Thyroid gland (tissue), 4 donors: ENCODE measurements at regions of chr11 and their contacts with region 1.

Region 1: DNA sequence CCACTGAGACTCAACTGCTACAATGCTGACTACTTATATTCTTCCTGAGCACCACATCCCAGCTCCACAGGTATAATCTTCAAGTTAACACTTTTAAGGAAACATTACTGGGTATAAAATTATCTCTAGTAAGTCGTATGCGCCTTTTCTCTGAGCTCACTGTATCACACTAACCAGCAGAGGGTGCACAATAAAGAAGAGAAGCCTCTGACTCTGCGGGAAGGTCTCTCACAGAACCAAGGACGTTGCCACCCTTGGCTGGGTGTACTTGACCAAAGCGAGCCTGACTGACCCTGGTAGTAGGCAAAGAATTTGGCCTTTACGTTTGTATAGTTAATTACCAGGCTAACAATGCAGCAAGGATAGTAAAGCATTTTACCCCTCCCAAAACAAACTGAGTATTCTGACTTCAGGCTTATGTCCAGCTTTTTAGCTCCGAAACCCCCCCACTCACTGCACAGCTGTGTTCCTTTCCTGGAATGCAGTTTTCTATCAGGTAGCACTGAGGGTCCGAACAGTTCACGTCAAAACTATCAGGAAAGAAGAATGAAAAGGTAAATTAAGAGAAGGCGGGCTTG is at the start of gene BTBD18:
- DNase-seq: peak; percentile 67 to 68
- H3K4me3 ChIP-seq: no peak within 1 kb of the TSS
- H3K27ac ChIP-seq: no peak within 1 kb of the TSS
- H3K4me1 ChIP-seq: peaks cover 0 to 6% of the 10 kb centered on the region in 2 donors
- H3K27me3 ChIP-seq: no peaks in the 10 kb centered on the region
- CTCF ChIP-seq: peak in 5 of 6 experiments; percentile 30 to 70 (median 57)
- POLR2A ChIP-seq: no peak
- total RNA-seq, gene BTBD18: not detected

Region 2: GRCh38 chr11:57644748-57645688 is 106.7 kb before region 1 on chr11:
- intact Hi-C with region 1: no loop called
- DNase-seq: peak; percentile 79 to 85
- H3K4me3 ChIP-seq: no peak overlapping the region
- H3K27ac ChIP-seq: peak overlapping the region in 2 of 3 donors; percentile 62 to 81
- H3K4me1 ChIP-seq: peaks cover 69 to 100% of the 10 kb centered on the region in 2 donors
- H3K27me3 ChIP-seq: peaks cover 3% of the 10 kb centered on the region
- CTCF ChIP-seq: peak; percentile 50 to 88 (median 76)
- POLR2A ChIP-seq: no peak

Region 3: DNA sequence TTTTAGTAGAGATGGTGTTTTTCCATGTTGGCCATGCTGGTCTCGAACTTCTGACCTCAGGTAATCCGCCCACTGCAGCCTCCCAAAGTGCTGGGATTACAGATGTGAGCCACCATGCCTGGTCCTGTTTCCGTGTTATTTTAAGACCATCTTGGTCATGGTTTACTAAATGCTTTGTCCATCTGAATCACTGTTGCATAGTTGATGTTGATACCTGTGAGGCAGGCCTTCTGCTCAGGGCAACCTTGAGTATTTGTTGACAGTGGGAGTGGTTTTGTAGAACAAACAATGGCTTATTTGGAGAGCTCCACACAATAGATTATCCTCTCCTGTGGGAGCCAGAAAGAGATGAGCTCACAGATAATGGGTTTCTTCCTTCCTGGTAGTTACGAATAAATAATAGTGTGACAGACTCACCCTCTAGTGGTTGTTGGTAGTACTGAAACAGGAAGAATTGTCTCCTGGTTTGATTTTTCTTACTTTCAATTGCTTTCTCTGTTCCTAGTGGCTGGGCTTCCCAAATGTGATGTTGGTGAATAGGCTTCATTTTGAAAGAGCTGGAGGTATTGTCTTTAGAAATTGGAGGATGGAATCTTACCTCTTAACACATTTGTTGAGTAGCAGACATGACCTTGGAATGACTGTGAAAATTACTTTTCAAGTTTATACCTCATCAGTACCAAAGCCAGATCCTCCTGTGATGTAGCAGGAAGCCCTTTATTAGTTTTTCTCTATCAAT is 48.8 kb after region 1 on chr11:
- intact Hi-C with region 1: loop called (anchors 5 kb)
- DNase-seq: no peak
- H3K4me3 ChIP-seq: no peak overlapping the region
- H3K27ac ChIP-seq: peak overlapping the region; percentile 72 to 84 (median 80)
- H3K4me1 ChIP-seq: peaks cover 26 to 28% of the 10 kb centered on the region in 2 donors
- H3K27me3 ChIP-seq: no peaks in the 10 kb centered on the region
- CTCF ChIP-seq: peak; percentile 78 to 99 (median 88)
- POLR2A ChIP-seq: no peak

Region 4: DNA sequence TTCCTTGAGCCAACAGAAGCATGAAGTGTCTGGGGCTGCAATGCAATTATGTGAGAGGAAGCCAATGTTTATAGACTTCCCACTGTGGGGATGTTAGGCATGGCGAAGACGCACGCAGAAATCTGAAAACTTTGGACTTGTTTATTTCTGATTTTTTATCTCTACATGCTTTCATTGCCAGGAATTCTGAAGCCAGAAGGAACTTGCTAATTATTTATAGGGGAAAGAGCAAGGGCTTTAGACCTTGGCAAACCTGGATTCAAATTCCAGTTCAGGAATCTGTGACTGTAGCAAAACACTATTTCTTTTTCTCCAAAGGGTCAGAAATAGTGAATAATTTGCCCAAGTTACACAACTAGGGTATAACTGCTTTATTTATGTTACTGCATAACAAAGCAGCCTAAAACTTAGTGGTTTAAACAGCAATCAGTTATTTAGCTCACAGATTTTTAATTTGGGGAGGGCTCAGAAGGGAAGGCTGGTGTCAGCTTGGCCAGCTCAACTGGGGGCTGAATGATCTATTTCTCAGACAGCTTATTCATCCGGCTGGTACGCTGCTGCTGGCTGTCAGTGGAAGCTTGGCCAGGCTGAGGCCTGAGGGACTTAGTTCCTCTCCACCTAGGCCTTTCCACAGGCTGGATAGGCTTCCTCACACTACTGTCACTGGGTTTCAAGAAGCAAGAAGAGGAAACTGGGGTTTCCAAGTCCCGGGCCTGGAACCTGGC is 277.1 kb after region 1 on chr11:
- intact Hi-C with region 1: no loop called
- DNase-seq: no peak
- H3K4me3 ChIP-seq: no peak overlapping the region
- H3K27ac ChIP-seq: no peak overlapping the region
- H3K4me1 ChIP-seq: peaks cover 0 to 10% of the 10 kb centered on the region in 2 donors
- H3K27me3 ChIP-seq: no peaks in the 10 kb centered on the region
- CTCF ChIP-seq: no peak
- POLR2A ChIP-seq: no peak